ENCODE measurements at regions of chr1 and their contacts with region 1.

Region 1: GRCh38 chr1:206854401-206855129 is 10.9 kb upstream of the IL20 start:
- DNase-seq: peak in 1 of 2 experiments; percentile 54
- H3K4me3 ChIP-seq: no peak overlapping the region
- H3K27ac ChIP-seq: no peak overlapping the region
- H3K4me1 ChIP-seq: no peaks in the 10 kb centered on the region; the same call in 1 of the 2 replicates
- H3K27me3 ChIP-seq: peaks cover 37% of the 10 kb centered on the region
- CTCF ChIP-seq: no peak

Region 2: DNA sequence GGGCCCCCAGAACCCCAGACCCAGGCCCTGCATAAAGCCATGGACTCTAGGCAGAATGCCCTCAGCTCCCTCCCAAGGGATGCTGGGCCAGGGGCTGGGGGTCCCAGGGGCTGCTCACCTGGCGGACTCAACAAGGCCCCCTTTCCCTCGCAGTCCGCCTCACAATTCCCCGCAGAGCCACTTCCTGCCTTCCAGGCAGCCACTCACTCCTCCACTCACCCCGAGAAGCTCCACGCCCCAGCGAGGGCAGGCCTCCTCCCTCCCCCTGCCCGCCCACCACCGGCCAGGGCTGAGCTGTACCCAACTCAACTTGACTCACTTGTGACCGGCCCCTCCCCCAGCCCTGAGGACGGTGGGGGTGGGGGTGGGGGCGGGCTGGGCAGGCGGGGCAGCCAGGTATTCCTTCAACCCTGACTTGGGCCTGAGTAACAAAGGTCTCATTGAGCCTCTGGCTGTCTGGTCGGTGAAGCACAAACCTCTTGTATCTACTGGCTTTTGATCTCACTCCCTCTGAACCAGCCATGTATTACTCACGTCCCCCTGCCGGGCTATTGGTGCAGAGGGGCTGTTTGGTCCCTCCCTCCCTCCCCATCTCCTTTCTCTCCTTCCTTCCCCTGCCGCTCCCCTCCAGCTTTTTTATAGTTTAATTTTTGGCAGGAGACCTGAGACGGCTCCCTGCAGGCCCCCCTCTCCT is 1404.7 kb before region 1 on chr1:
- CTCF ChIA-PET with region 1: no interaction called
- POLR2A ChIA-PET with region 1: interaction called, 10 read pairs
- intact Hi-C with region 1: no loop called
- DNase-seq: peak; percentile 93 to 95
- H3K4me3 ChIP-seq: peak overlapping the region; percentile 79
- H3K27ac ChIP-seq: peak overlapping the region; percentile 74
- H3K4me1 ChIP-seq: peaks cover 42% of the 10 kb centered on the region
- H3K27me3 ChIP-seq: peaks cover 1% of the 10 kb centered on the region; the same call in 1 of the 2 replicates
- CTCF ChIP-seq: no peak

Region 3: GRCh38 chr1:206684478-206685333 is 169.9 kb before region 1 on chr1 and contains the start of gene MAPKAPK2:
- CTCF ChIA-PET with region 1: no interaction called
- POLR2A ChIA-PET with region 1: no interaction called
- intact Hi-C with region 1: no loop called
- DNase-seq: peak in 1 of 2 experiments; percentile 62
- H3K4me3 ChIP-seq: peak within 1 kb of the TSS; percentile 99
- H3K27ac ChIP-seq: peak within 1 kb of the TSS; percentile 82
- H3K4me1 ChIP-seq: peaks cover 25% of the 10 kb centered on the region
- H3K27me3 ChIP-seq: no peaks in the 10 kb centered on the region
- CTCF ChIP-seq: no peak
- total RNA-seq, gene MAPKAPK2: 62.6 and 70.6 TPM in 2 replicates